ENCODE measurements at regions of chr2 and their contacts with region 1.

Region 1: DNA sequence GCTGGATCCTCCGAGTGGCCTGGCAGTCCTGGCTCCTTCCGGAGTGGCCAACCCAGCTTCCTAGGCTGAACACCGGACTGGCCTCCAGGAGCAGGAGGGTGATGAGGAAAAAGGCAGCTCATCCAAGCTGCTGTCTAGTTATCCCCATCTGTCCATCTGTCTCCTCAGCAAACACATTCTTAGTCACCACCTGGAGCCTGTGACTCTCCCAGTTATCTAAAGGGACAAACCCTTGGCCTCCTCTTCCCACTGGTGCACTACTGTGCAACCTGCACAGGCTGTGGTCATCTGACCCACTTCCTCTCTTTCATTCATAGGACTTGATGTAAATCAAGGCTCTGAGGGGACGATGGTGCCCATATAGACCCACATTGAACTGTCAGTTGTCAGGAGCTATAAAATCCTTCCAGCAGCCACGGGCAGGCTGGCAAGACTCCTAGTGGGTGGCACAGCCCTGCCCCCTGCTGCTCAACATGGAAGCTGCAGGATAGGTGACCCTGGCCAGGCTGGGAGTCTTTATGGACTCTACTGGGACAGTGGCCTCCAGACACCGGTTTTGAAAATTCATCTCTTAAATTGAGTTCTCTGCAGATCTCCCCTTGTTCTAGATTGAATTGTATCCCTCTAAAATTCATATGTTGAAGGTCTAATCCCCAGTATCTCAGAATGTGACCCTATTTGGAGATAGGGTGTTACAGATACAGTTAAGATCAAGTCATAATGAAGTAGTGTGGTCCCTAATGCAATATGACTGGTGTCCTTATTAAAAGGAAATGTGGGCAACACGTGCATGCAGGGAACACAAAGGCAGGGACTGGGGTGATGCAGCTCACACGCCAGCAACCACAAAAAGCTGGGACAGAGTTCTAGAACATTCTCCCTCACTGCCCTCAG is 29.3 kb upstream of the DUSP2 start:
- DNase-seq: peak; percentile 64 to 86 (median 79)
- H3K4me3 ChIP-seq: no peak overlapping the region
- H3K27ac ChIP-seq: peak overlapping the region in 5 of 59 donors; percentile 8 to 56 (median 15)
- H3K27me3 ChIP-seq: no peaks in the 10 kb centered on the region
- CTCF ChIP-seq: peak; percentile 48 to 99 (median 94)

Region 2: DNA sequence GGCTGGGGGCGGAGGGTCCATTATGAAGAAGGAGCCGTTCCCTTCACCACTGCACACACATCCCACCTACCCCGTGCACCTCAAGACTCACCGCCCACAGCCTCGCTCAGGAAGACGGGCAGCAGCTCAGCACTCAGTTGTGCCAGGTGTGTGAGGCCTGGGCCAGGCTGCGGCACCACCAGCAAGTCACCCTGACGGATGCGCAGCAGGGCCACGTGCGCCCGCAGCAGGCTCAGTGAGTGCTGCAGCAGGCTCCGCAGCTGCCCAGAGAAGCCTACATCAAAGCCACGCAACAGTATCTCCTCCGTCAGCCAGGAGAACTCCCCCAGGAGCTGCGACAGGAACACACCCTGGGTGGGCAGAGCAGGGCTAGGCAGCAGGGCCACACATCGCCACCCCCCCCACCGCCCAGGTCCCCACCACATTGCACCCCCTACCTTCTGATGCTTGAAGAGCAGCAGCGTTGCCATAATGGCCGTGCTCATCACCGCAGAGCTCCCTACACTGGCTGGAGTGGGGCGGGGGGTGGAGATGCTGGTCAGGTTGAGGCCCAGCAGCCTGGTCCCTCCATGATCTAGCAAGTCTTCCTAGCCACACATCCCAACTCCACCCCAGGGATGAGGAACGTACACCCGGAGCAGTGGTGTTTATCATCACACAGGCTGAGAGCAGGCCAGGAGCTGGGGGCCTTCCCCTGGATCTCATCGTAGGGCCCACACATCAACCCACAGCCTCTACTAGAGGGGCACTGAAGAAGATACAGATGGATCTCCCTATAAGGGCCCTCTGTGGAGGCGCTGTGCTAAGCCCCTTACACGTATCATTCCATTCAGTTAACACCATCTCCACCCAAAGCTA is 149.9 kb before region 1 on chr2:
- intact Hi-C with region 1: loop called in 1 of 2 experiments (anchors 10 kb)
- DNase-seq: peak in 5 of 10 donors; percentile 45 to 72 (median 55)
- H3K4me3 ChIP-seq: no peak overlapping the region
- H3K27ac ChIP-seq: peak overlapping the region in 57 of 59 donors; percentile 25 to 86 (median 69)
- H3K27me3 ChIP-seq: no peaks in the 10 kb centered on the region
- CTCF ChIP-seq: peak in 1 of 56 donors; percentile 5

Region 3: DNA sequence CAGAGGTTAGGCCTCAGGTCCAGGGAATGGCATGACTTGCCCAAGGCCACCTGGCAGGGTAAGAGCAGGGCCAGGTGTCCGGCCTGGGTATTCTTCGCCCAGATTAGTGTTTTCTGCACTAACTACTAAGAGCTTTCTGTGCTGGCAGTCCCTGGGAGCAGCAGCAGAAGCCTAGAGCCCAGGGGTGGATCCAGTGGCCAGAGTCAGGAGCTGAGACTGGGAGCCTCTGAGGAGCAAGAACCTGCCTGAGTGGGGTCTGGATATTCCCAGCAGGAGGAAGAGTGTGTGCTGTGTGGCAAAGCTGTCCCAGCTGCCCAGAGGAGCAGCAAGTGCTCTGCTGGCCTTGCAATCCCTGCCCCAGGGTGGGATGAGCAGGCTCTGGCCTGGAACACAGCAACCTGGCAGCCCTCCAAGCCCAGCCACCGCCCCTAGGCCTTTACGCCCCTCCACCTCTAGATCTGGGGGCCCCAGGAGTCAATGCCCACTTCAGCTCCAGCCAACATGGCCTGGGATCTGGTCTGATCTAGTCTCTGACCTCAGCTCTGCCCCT is 109.0 kb before region 1 on chr2:
- intact Hi-C with region 1: loop called in 1 of 2 experiments (anchors 10 kb)
- DNase-seq: peak in 2 of 10 donors; percentile 21 to 50
- H3K4me3 ChIP-seq: no peak overlapping the region
- H3K27ac ChIP-seq: peak overlapping the region in 1 of 59 donors; percentile 6
- H3K27me3 ChIP-seq: no peaks in the 10 kb centered on the region
- CTCF ChIP-seq: no peak

Region 4: DNA sequence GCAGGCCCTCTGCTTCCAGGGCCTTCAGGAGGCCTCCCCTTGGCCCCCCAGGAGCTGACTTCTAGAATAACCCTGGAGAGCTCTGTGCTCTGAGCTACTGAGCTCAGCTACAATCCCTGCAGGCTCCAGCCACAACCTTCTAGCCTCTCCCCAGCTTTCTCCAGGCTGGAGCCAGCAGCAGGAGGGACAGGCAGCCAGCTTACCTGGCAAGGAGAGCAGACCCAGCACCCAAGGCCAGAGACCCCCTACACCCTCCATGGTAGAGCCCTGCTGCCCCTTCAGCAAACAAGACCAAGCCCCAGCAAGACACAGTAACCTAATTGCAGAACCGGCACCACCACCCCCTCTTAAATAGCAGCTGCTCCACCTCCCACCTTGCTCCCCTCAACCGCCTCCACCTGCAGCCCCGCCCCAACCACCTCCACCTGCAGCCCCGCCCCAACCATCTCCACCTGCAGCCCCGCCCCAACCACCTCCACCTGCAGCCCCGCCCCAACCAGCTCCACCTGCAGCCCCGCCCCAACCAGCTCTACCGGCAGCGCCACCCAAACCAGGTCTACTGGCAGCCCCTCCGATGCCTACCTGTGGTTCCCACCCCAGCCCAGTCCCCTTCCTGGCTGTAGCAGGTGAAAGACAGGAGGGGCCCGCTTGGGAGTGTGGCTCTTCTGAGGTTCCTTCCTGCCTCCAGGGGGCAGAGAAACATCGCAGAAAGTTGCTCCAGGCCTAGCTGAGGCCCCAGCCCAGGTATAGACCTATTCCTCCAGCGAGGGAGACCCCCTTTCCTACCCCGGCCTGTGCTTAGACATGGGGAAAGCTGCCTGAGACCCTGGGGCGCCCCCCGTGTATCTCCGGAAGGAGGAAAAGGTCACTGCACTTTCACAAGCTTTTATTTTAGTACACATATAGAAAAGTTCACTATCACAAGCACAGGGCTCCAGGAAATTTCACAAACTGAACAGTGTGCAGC is 36.0 kb before region 1 on chr2 and contains the start of gene ASTL:
- intact Hi-C with region 1: loop called (anchors 1 to 5 kb)
- DNase-seq: peak in 3 of 10 donors; percentile 27 to 61 (median 40)
- H3K4me3 ChIP-seq: no peak within 1 kb of the TSS
- H3K27ac ChIP-seq: no peak within 1 kb of the TSS
- H3K27me3 ChIP-seq: no peaks in the 10 kb centered on the region
- CTCF ChIP-seq: peak in 54 of 56 donors; percentile 21 to 77 (median 53)
- total RNA-seq, gene ASTL: 0.29 to 7.9 (median 0.86) TPM in 61 of 120 experiments, not detected in the others

Region 5: DNA sequence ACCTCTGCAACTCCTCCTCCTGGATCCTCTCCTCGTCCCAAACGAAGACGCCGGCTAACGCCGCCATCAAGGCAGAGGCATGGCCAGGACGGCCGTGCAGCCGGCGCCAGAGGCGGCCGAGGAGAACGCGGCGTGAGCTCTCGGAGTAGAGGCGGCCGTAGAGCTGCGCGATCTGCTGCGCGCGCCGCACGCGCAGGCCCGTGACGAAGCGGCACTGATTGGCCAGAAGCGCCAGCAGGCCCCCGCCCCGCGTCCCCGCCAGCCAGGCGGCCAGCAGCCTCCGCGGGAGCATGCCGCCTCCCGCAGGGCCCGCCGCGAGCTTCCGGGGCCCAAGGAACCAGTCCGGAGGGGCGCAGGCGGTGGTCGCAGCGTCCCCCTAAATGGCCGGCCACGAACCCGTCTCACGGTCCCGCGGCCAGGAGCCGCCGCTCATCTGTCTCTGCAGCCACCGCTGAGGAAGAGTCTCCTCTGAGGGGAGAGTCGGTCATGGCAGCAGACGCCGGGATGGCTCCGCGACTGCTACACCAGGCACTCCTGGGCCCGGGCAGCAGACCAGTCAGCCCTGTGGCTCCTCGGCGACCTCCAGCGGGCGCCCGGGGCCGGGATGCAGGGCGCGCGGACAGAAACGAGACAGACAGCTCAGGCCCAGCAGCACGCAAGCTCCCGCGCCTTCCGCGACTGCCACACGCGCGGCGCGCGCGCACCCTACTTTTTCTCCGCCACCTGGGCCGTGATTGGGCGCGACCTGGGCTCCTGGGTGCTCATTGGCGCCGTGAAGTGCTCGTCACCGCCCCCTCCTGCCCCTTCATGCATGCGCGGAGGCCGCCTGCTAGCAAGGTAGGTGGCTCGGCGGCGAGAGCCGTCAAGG is 33.9 kb after region 1 on chr2 and contains the start of gene STARD7:
- intact Hi-C with region 1: loop called in 1 of 2 experiments (anchors 2 kb)
- DNase-seq: peak; percentile 96 to 99 (median 98)
- H3K4me3 ChIP-seq: peak within 1 kb of the TSS; percentile 58 to 99 (median 94)
- H3K27ac ChIP-seq: peak within 1 kb of the TSS; percentile 70 to 99 (median 95)
- H3K27me3 ChIP-seq: no peaks in the 10 kb centered on the region
- CTCF ChIP-seq: peak in 35 of 56 donors; percentile 4 to 63 (median 37)
- total RNA-seq, gene STARD7: 105 to 205 (median 135) TPM

Measured in dorsolateral prefrontal cortex (tissue), 120 donors.